ENCODE measurements at regions of chr11 and their contacts with region 1.

Region 1: DNA sequence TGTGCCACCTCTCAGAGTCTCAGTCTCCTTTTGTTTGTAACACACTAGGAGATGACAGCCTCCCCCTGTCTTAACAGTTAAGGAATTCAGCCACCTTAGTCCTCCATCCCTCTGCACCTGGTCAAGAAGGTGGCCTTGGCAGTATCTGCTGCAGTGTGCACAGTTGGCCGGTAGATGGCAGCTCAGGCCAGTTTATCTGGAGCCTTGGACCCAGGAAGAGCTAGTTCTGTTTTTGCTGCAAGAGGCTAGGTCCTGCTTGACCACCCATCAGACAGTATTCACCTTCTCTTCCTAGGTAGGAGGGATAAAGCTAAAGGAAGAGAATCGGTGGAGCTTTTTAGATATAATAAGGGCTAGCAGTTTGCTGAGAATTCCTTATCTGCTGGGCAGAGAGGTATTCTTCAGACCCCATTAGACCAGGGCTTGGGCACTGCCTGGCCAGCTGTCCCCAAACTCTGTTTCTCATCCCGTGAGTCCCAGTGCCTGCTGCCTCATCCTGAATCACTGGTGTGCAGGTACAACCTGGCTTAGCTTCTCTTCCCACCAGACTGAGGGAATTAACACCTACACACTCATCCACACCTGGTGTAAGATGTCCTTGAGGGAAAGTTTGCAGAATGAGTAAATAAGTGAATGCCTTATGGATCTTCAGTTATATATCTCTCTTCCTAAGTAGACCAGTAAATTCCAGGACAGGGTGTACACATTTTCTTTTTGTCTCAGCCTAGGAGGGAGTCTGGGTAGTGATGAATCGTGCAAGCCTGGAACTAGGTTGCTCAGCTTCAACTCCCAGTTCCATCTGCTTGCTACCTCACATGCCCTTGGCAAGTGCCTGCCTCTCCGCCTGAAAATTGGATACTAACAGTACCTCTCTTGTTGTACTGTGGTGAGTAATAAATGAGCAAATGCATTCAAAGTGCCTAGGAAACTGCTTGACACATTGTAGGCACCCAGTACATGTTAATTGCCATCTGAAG is 70.8 kb upstream of the NARS2 start:
- DNase-seq: peak; percentile 57
- H3K4me3 ChIP-seq: no peak overlapping the region
- H3K27ac ChIP-seq: no peak overlapping the region
- H3K4me1 ChIP-seq: no peaks in the 10 kb centered on the region
- H3K27me3 ChIP-seq: no peaks in the 10 kb centered on the region
- CTCF ChIP-seq: peak; percentile 81 to 93 (median 88)
- POLR2A ChIP-seq: no peak

Region 2: DNA sequence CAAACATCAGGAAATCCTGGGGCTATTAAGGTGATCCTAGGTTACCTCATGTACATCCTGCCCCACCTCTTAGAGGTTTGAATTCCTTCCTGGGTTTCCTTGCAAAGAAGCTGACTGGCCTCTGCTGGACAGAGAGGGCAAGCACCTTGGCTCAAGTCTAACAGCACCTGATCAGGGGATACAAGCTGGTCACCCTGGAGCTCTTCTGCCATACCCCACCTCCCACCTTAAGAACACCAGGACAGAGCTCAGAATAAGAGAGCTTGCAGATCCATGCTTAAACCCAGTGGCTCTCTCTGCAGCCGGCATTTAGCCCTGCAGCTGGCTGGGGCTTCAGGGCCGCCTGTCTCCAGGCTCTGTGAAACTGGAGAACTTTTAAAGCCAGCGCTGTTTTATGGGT is 315.7 kb after region 1 on chr11:
- intact Hi-C with region 1: loop called (anchors 5 kb)
- DNase-seq: peak; percentile 44
- H3K4me3 ChIP-seq: no peak overlapping the region
- H3K27ac ChIP-seq: no peak overlapping the region
- H3K4me1 ChIP-seq: peaks cover 3% of the 10 kb centered on the region
- H3K27me3 ChIP-seq: no peaks in the 10 kb centered on the region
- CTCF ChIP-seq: peak in 3 of 4 experiments; percentile 40 to 77 (median 69)
- POLR2A ChIP-seq: no peak

Region 3: DNA sequence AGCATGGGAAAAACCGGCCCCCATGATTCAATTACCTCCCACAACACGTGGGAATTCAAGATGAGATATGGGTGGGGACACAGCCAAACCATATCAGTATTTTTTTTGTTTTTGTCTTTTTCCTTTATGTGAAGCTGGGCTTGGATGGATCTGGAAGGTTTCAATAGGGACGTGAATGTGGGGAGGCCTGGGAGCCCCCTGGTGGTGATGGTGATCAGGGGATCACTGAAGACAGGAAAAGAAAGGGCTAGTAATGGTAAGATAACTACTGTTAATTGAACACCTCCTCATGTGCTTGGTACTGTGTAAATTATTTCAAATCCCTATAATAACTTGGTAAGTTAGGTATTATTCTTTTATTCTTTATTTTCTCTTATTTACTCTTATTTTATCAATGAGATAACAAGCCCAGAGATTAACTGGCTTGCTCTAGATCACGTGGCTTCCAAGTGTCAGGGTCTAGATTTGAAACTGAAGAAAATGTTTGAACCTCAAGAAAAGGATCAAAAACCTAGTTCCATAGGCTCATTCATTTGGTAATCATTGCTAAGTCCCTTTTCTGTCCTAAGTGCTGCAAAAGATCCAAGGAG is 431.1 kb after region 1 on chr11:
- intact Hi-C with region 1: loop called (anchors 2 kb)
- DNase-seq: peak; percentile 33
- H3K4me3 ChIP-seq: no peak overlapping the region
- H3K27ac ChIP-seq: no peak overlapping the region
- H3K4me1 ChIP-seq: no peaks in the 10 kb centered on the region
- H3K27me3 ChIP-seq: no peaks in the 10 kb centered on the region
- CTCF ChIP-seq: peak in 3 of 4 experiments; percentile 52 to 58 (median 57)
- POLR2A ChIP-seq: no peak

Region 4: GRCh38 chr11:79097246-79097875 is 451.8 kb after region 1 on chr11:
- intact Hi-C with region 1: loop called (anchors 5 kb)
- DNase-seq: peak; percentile 19
- H3K4me3 ChIP-seq: no peak overlapping the region
- H3K27ac ChIP-seq: no peak overlapping the region
- H3K4me1 ChIP-seq: no peaks in the 10 kb centered on the region
- H3K27me3 ChIP-seq: no peaks in the 10 kb centered on the region
- CTCF ChIP-seq: no peak
- POLR2A ChIP-seq: no peak

Region 5: DNA sequence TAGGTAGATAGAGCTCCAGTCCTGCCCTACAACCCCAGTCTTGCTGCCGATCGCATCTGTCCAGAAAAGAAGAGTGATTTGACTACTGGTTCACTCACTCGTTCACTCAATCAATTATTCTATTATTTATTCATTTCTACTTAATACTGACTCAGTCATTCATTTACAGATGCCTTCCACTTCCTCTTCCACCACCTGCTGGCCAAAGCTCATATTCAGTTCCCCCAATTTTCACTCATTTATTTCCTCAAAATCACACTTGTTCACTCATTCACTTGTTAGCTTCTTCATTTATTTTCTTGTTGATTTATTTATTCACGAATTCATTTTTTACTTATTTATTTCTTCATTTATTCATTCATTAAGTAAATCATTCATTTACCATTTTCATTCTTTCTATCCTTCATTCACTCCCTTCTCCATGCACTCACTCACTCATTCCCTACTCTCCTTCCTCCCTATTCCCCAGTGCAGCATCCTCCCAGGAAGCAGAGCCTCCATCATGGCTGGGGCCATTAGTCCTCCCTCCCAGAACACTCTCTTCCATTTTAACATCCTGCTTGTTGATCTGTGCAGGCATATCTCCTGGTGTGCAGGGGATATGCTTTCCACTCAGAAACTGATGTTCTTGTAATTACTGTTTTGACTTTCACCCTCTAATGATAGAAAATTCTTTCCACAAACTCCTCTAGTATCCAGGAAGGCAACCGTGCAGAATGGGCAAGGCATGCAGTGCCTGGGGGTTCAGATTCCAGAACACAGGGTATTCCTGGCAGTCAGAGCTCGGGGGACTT is 514.3 kb after region 1 on chr11:
- intact Hi-C with region 1: loop called (anchors 10 kb)
- DNase-seq: no peak
- H3K4me3 ChIP-seq: no peak overlapping the region
- H3K27ac ChIP-seq: no peak overlapping the region
- H3K4me1 ChIP-seq: no peaks in the 10 kb centered on the region
- H3K27me3 ChIP-seq: no peaks in the 10 kb centered on the region
- CTCF ChIP-seq: peak in 1 of 4 experiments; percentile 20
- POLR2A ChIP-seq: no peak

Region 6: GRCh38 chr11:79493555-79494171 is 848.1 kb after region 1 on chr11:
- intact Hi-C with region 1: loop called (anchors 5 kb)
- DNase-seq: peak; percentile 61
- H3K4me3 ChIP-seq: no peak overlapping the region
- H3K27ac ChIP-seq: no peak overlapping the region
- H3K4me1 ChIP-seq: no peaks in the 10 kb centered on the region
- H3K27me3 ChIP-seq: no peaks in the 10 kb centered on the region
- CTCF ChIP-seq: peak; percentile 39 to 78 (median 60)
- POLR2A ChIP-seq: no peak

Measured in prostate gland (tissue), 2 donors.